ENCODE measurements at regions of chr2 and their contacts with region 1.

Region 1: GRCh38 chr2:240566203-240567136 is 1.8 kb upstream of the RNPEPL1 start:
- DNase-seq: peak; percentile 93 to 96 (median 96)
- ATAC-seq: peak; percentile 81 to 88 (median 86)
- H3K4me3 ChIP-seq: peak overlapping the region in 11 of 12 donors; percentile 20 to 90 (median 80)
- H3K27ac ChIP-seq: peak overlapping the region in 11 of 12 donors; percentile 86 to 97 (median 95)
- H3K4me1 ChIP-seq: peaks cover 12 to 82% (median 55%) of the 10 kb centered on the region in 12 donors
- H3K27me3 ChIP-seq: no peaks in the 10 kb centered on the region
- CTCF ChIP-seq: peak; percentile 72 to 98 (median 96)
- POLR2A ChIP-seq: peak in 1 of 2 donors; percentile 60

Region 2: GRCh38 chr2:240459401-240460252 is 106.8 kb before region 1 on chr2:
- intact Hi-C with region 1: loop called in 1 of 10 experiments (anchors 5 kb)
- DNase-seq: peak in 4 of 5 donors; percentile 8 to 58 (median 24)
- ATAC-seq: no peak
- H3K4me3 ChIP-seq: no peak overlapping the region
- H3K27ac ChIP-seq: no peak overlapping the region
- H3K4me1 ChIP-seq: peaks cover 0 to 47% (median 10%) of the 10 kb centered on the region in 12 donors
- H3K27me3 ChIP-seq: peaks cover 0 to 18% (median under 1%) of the 10 kb centered on the region in 9 donors
- CTCF ChIP-seq: no peak
- POLR2A ChIP-seq: no peak

Region 3: DNA sequence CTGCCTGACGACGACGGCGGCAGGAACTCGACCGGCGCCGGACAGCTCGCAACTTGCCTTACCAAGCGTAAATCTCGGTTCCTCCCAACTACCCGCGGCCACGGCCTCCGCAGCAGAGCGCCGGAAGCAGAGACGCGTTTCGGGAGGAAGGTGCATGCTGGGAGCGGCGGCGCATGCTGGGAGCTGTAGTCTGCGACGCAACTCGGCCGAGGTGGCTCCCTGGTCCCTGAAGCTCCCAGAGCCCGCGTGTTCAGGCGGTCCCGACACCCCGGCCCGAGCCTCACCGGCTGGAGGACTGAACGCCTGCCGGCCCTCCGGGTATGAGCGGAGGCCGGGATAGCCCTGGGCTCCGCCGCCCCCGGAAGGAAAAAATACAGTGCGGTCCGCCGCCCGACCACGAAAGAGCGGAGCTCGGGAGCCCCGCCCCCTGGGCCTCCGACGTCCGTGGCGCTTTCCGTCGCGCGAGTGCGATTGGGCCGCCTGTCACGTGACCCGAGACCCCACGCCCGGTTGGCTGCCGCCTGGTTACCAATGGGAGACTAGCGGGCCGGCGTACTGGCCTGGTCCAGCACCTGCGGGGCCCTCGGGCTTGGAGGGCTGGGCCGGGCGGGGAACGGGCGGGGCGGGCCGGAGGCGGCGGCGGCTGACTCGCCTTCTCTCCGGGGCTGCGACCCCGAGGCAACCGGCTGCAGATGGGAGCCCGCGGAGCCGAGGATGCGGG is 19.9 kb after region 1 on chr2 and contains the start of gene CAPN10:
- intact Hi-C with region 1: loop called in 3 of 10 experiments (anchors 1 to 2 kb)
- DNase-seq: peak; percentile 99
- ATAC-seq: peak; percentile 94 to 97 (median 96)
- H3K4me3 ChIP-seq: peak within 1 kb of the TSS; percentile 55 to 97 (median 83)
- H3K27ac ChIP-seq: peak within 1 kb of the TSS; percentile 83 to 98 (median 92)
- H3K4me1 ChIP-seq: peaks cover 7 to 65% (median 34%) of the 10 kb centered on the region in 12 donors
- H3K27me3 ChIP-seq: no peaks in the 10 kb centered on the region
- CTCF ChIP-seq: no peak
- POLR2A ChIP-seq: peak in 1 of 2 donors; percentile 57
- total RNA-seq, gene CAPN10: 14.9 to 35.6 (median 21.9) TPM

Region 4: DNA sequence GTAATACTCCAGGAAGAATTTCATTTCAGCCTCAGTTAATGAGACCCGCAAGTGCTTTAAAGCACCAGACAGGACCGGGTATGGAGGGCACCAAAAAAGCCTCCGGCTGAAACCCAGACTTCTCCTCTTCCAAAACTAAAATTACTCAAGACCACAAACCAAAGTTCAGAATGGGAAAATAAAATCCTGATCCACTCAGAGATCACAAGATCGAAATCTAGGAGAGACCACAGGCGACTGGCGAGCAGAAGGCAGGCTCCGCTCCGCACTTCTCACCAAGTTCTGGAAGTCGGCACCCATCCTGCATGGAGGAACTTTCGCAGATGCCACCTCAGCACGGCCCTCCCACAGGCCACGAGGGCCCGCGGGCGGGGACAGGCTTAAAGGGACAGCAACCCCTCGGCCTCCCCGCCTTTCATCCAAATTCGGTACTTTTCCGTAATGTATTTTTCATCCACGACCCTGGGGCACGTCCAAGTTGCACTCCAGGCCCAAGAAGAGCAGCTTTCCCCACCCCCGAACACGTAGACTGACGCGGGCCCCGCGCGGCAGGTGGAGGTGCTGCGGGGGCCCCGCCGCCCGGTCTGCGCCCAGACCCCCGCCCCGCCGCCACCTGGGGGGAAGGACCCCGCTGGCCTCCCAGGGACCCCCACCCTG is 705.3 kb after region 1 on chr2:
- intact Hi-C with region 1: no loop called
- DNase-seq: peak; percentile 85 to 91 (median 87)
- ATAC-seq: peak; percentile 85 to 91 (median 90)
- H3K4me3 ChIP-seq: peak overlapping the region; percentile 61 to 98 (median 92)
- H3K27ac ChIP-seq: peak overlapping the region; percentile 57 to 97 (median 93)
- H3K4me1 ChIP-seq: peaks cover 0 to 49% (median 37%) of the 10 kb centered on the region in 12 donors
- H3K27me3 ChIP-seq: no peaks in the 10 kb centered on the region
- CTCF ChIP-seq: no peak
- POLR2A ChIP-seq: no peak

Measured in heart left ventricle (tissue), 16 donors.